HCT116 (cell line): ENCODE measurements at regions of chr15 and their contacts with region 1.

Region 1: DNA sequence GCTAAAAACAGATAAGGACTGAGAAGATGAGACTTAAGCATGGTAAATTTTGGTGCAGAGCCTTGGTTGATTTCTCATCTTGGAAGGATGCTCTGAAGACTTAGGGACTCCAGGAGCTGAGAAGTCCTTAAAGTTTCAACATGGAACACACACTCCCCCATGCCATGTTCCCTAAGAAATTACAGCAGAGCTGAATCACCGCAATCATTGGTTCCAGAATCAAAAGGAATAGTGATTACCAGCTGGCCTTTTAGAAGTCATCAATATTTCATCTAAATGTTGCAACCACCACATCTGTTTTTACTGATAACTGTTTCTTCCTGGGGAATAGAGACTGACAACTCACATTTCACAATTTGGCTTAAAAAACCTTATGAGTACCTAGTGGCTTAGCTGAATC is 229.3 kb downstream of the MINAR1 start:
- DNase-seq: no peak
- ATAC-seq: no peak
- H3K4me3 ChIP-seq: no peak overlapping the region
- H3K27ac ChIP-seq: no peak overlapping the region
- H3K4me1 ChIP-seq: no peaks in the 10 kb centered on the region
- H3K27me3 ChIP-seq: peaks cover 67% of the 10 kb centered on the region
- CTCF ChIP-seq: no peak
- POLR2A ChIP-seq: no peak
- RAD21 ChIP-seq: no peak

Region 2: DNA sequence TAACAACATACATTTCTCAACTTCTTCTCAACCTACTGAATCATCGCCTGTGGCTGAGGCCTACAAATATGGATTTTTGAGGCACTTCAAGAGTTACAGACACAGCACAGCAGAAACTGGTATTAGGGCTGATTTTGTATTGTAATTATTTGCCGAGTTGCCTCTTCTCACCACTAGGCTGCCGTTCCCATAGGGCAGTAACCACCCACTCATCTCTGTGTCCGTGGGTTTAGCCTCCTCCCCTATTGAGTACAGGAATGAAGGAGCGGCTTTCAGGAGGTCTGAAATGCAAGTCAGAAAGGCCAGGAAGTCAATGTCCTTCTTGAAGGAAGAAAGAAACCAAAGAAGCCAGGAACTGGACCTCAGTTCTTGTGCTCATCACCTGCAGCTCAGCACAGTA is 14.6 kb after region 1 on chr15:
- CTCF ChIA-PET with region 1: no interaction called
- POLR2A ChIA-PET with region 1: no interaction called
- RAD21 ChIA-PET with region 1: no interaction called
- intact Hi-C with region 1: loop called (anchors 1 kb)
- DNase-seq: no peak
- ATAC-seq: peak; percentile 61; the same call in 1 of the 2 replicates
- H3K4me3 ChIP-seq: no peak overlapping the region
- H3K27ac ChIP-seq: no peak overlapping the region
- H3K4me1 ChIP-seq: no peaks in the 10 kb centered on the region
- H3K27me3 ChIP-seq: peaks cover 30% of the 10 kb centered on the region
- CTCF ChIP-seq: peak in 2 of 3 experiments; percentile 25 to 37; a peak in 3 of 6 replicates
- POLR2A ChIP-seq: no peak
- RAD21 ChIP-seq: no peak

Region 3: DNA sequence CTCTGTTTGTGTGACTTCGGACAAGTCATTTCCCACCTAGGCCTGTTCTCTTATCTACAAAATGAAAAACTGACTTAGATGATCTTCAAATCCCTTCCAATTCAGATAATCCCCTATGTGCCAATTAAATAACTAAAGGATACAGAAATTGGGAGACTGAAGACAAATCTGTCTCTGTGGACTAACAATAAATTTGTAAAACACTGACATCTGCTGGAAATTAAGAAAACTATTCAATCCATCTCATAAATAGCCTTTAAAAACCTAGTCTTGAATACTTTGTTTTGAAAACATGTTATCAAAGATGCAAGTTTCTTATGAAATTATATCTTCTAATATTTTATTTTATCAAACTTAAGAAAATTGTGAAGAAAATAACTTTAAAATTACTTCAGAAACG is 197.1 kb after region 1 on chr15:
- CTCF ChIA-PET with region 1: no interaction called
- POLR2A ChIA-PET with region 1: no interaction called
- RAD21 ChIA-PET with region 1: no interaction called
- intact Hi-C with region 1: no loop called
- DNase-seq: no peak
- ATAC-seq: no peak
- H3K4me3 ChIP-seq: no peak overlapping the region
- H3K27ac ChIP-seq: no peak overlapping the region
- H3K4me1 ChIP-seq: no peaks in the 10 kb centered on the region
- H3K27me3 ChIP-seq: no peaks in the 10 kb centered on the region
- CTCF ChIP-seq: no peak; a peak in 1 of 6 replicates
- POLR2A ChIP-seq: no peak
- RAD21 ChIP-seq: no peak